Activated CD4-positive, alpha-beta memory T cell treated with anti-CD3 and anti-CD28 coated beads for 36 hours (primary cell): ENCODE measurements at regions of chr1 and their contacts with region 1.

Region 1: GRCh38 chr1:15323351-15323988 is 76.4 kb downstream of the FHAD1 start:
- DNase-seq: peak; percentile 81
- H3K4me3 Mint-ChIP-seq: no peak overlapping the region
- H3K27ac Mint-ChIP-seq: no peak overlapping the region
- H3K4me1 Mint-ChIP-seq: no peaks in the 10 kb centered on the region
- H3K27me3 Mint-ChIP-seq: peaks cover 3% of the 10 kb centered on the region

Region 2: DNA sequence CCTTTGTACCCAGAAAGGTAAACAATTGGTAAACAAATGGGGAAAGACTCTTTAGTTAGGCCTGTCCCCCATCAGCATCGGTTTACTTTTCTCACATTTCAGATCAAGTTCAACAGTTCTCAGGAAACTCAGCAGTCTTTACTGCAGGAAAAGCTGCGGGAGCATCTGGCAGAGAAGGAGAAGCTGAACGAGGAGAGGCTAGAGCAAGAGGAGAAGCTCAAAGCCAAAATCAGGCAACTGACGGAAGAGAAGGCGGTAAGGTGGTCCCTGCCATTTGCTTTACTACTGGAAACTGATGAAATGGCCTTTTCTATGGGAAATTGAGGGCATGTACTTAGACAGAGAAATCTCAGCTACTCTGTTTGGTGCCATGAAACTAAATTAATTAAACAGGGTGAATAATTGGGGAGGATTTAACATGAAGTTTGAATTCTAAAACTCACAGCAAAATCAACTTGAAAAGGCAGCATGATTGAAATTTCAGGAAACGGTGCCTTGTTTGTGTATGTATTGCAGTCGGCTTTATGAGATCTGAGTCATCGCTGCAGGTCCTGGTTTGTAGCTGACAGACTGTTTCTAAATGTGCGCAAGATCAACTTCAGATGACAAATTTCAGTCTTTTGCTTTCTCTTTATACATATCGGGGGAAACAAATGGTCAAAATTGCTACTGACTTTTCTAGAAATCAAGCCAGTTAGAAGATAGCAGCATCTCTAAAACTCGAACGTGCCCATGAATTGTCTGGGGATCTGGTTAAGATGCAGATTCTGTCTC is 18.4 kb after region 1 on chr1:
- CTCF ChIA-PET with region 1: interaction called, 18 read pairs
- POLR2A ChIA-PET with region 1: interaction called, 3 read pairs
- intact Hi-C with region 1: no loop called
- DNase-seq: peak; percentile 31
- H3K4me3 Mint-ChIP-seq: no peak overlapping the region
- H3K27ac Mint-ChIP-seq: peak overlapping the region; percentile 2
- H3K4me1 Mint-ChIP-seq: peaks cover 31% of the 10 kb centered on the region
- H3K27me3 Mint-ChIP-seq: peaks cover 19% of the 10 kb centered on the region

Region 3: DNA sequence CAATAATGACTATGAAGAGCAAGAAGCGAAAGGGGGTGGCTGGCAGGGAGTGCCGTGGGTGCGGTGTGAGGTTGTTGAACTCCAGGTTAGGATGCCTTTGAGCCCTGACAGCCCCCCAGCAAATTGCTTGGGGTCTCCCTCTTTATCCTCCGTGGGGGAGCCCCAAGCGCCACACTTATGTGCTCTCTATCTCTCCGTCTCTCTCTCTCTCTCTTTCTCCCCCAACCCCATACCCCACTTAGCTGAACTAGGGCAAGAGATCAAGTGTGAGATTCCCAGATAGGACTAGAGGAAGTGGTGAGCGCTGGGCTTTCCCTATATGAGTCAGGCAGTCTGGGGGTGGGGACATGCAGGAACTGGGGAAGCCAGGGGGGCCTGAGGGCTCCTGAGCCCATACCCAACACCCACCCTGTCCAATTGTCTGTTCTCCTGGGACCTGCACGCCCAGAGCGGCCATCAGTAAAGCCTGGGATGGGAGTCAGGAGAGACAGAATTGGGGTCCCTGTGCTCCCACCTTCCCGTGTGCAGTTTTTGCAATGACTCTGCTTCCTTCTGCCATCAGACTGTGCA is 94.0 kb after region 1 on chr1:
- CTCF ChIA-PET with region 1: interaction called, 16 read pairs
- POLR2A ChIA-PET with region 1: no interaction called
- intact Hi-C with region 1: loop called (anchors 5 kb)
- DNase-seq: peak; percentile 73
- H3K4me3 Mint-ChIP-seq: peak overlapping the region; percentile 35
- H3K27ac Mint-ChIP-seq: peak overlapping the region; percentile 71
- H3K4me1 Mint-ChIP-seq: peaks cover 58% of the 10 kb centered on the region
- H3K27me3 Mint-ChIP-seq: no peaks in the 10 kb centered on the region

Region 4: GRCh38 chr1:15436881-15437442 is 113.5 kb after region 1 on chr1:
- CTCF ChIA-PET with region 1: interaction called, 203 read pairs
- POLR2A ChIA-PET with region 1: interaction called, 5 read pairs
- intact Hi-C with region 1: no loop called
- DNase-seq: no peak
- H3K4me3 Mint-ChIP-seq: no peak overlapping the region
- H3K27ac Mint-ChIP-seq: no peak overlapping the region
- H3K4me1 Mint-ChIP-seq: no peaks in the 10 kb centered on the region
- H3K27me3 Mint-ChIP-seq: no peaks in the 10 kb centered on the region